ENCODE measurements at regions of chr4 and their contacts with region 1.

Region 1: DNA sequence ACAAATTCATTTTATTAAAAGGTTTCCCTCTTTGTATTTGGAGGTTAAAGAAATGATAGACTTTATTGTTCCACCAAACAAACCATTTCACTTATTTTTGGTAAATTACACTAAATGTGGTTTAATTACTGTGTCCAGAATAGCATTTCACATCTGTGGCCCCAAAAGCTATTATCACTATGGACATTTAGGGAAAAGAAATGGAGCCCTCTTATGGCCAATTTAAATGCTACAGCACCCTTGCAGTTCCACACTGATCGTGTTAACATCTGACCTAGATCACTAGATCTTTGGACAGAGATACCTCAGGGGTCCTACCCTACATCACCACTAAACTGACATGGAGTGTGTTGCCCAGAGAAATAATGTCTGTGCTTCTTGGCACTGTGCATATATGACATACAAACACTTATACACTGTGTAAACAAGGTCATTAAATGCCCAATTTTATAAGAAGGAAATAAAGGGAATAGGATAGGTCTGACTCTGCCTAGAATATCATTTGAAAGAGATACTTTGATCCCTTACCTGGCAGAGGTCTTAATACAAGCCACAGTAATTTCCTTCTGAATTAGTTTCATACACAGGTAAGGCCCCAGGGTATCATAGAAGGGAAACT is 163.9 kb downstream of the KDR start:
- DNase-seq: peak; percentile 35 to 63 (median 53)
- H3K4me3 ChIP-seq: no peak overlapping the region
- H3K27ac ChIP-seq: no peak overlapping the region
- H3K4me1 ChIP-seq: peaks cover 0 to 8% (median 6%) of the 10 kb centered on the region in 4 experiments
- H3K27me3 ChIP-seq: no peaks in the 10 kb centered on the region

Region 2: GRCh38 chr4:54322818-54323417 is 638.5 kb before region 1 on chr4:
- CTCF ChIA-PET with region 1: interaction called, 28 read pairs
- POLR2A ChIA-PET with region 1: no interaction called
- DNase-seq: peak; percentile 65 to 75 (median 72)
- H3K4me3 ChIP-seq: no peak overlapping the region
- H3K27ac ChIP-seq: no peak overlapping the region
- H3K4me1 ChIP-seq: no peaks in the 10 kb centered on the region
- H3K27me3 ChIP-seq: no peaks in the 10 kb centered on the region

Region 3: DNA sequence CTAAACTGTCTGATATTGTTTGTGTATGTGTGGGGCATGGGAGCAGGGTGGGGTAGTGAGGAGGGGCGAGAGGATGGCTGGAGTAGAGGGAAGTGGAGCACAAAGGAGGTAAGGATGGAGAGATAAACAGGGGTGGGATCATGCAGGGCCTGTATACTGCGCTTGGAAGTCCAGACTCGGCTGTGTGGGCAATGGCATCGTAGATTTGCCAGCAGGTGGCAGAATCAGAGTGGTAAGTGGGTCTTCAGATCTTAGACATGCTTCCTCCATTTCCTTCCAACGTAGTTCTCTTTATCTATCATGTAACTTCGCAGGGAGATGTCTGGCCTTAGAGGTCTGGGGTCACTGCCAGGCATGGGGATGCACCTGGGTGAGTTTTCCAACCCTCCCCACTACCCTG is 576.9 kb before region 1 on chr4:
- CTCF ChIA-PET with region 1: interaction called, 10 read pairs
- POLR2A ChIA-PET with region 1: no interaction called
- DNase-seq: peak; percentile 73 to 84 (median 80)
- H3K4me3 ChIP-seq: no peak overlapping the region
- H3K27ac ChIP-seq: no peak overlapping the region
- H3K4me1 ChIP-seq: peaks cover 0 to 5% (median 2%) of the 10 kb centered on the region in 4 experiments
- H3K27me3 ChIP-seq: no peaks in the 10 kb centered on the region

Region 4: GRCh38 chr4:54806351-54806750 is 155.1 kb before region 1 on chr4:
- CTCF ChIA-PET with region 1: no interaction called
- POLR2A ChIA-PET with region 1: no interaction called
- DNase-seq: no peak
- H3K4me3 ChIP-seq: no peak overlapping the region
- H3K27ac ChIP-seq: no peak overlapping the region
- H3K4me1 ChIP-seq: peaks cover 7 to 14% (median 14%) of the 10 kb centered on the region in 4 experiments
- H3K27me3 ChIP-seq: no peaks in the 10 kb centered on the region

Region 5: GRCh38 chr4:54941994-54942552 is 19.4 kb before region 1 on chr4:
- CTCF ChIA-PET with region 1: interaction called, 86 read pairs
- POLR2A ChIA-PET with region 1: no interaction called
- DNase-seq: peak; percentile 75 to 97 (median 96)
- H3K4me3 ChIP-seq: peak overlapping the region in 6 of 7 experiments; percentile 30 to 66 (median 39)
- H3K27ac ChIP-seq: peak overlapping the region; percentile 9 to 77
- H3K4me1 ChIP-seq: peaks cover 36 to 75% (median 59%) of the 10 kb centered on the region in 4 experiments
- H3K27me3 ChIP-seq: no peaks in the 10 kb centered on the region

Region 6: GRCh38 chr4:54971474-54971950 is 10.0 kb after region 1 on chr4:
- CTCF ChIA-PET with region 1: interaction called, 23 read pairs
- POLR2A ChIA-PET with region 1: no interaction called
- DNase-seq: peak; percentile 67 to 83 (median 81)
- H3K4me3 ChIP-seq: peak overlapping the region in 1 of 7 experiments; percentile 34
- H3K27ac ChIP-seq: no peak overlapping the region
- H3K4me1 ChIP-seq: no peaks in the 10 kb centered on the region
- H3K27me3 ChIP-seq: no peaks in the 10 kb centered on the region

Region 7: GRCh38 chr4:54986095-54986846 is 24.8 kb after region 1 on chr4:
- CTCF ChIA-PET with region 1: no interaction called
- POLR2A ChIA-PET with region 1: no interaction called
- DNase-seq: no peak
- H3K4me3 ChIP-seq: no peak overlapping the region
- H3K27ac ChIP-seq: no peak overlapping the region
- H3K4me1 ChIP-seq: no peaks in the 10 kb centered on the region
- H3K27me3 ChIP-seq: no peaks in the 10 kb centered on the region

Measured in common myeloid progenitor, CD34-positive (primary cell).